T-cell (primary cell): ENCODE measurements at regions of chr1 and their contacts with region 1.

Region 1: DNA sequence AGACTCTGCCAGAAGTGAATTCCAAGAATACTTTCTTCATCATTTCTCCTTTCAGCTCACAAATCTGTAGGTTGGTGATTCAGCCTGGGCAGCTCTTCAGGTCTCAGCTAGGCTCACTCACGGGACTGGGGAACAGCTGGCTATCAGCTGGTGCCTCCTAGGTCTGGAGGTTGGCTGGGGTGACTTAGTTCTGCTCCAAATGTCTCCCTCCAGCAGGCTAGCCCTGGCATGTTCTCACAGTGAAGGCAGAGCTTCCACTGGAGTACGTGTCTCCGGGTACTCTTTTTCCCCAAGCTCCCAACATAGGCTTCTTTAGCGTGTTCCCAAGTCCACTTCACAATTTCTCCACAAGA is 12.5 kb upstream of the VAMP4 start:
- DNase-seq: no peak
- ATAC-seq: no peak
- H3K4me3 ChIP-seq: no peak overlapping the region
- H3K4me3 Mint-ChIP-seq: no peak overlapping the region
- H3K27ac ChIP-seq: no peak overlapping the region
- H3K27ac Mint-ChIP-seq: peak overlapping the region in 1 of 2 donors; percentile 34
- H3K4me1 ChIP-seq: no peaks in the 10 kb centered on the region
- H3K4me1 Mint-ChIP-seq: no peaks in the 10 kb centered on the region
- H3K27me3 ChIP-seq: peaks cover 0 to 7% of the 10 kb centered on the region in 2 experiments
- H3K27me3 Mint-ChIP-seq: peaks cover 4 to 5% of the 10 kb centered on the region in 2 donors

Region 2: GRCh38 chr1:171730052-171730451 is 24.3 kb before region 1 on chr1:
- CTCF ChIA-PET with region 1: no interaction called
- POLR2A ChIA-PET with region 1: interaction called, 3 to 10 read pairs
- DNase-seq: no peak
- ATAC-seq: no peak
- H3K4me3 ChIP-seq: no peak overlapping the region
- H3K4me3 Mint-ChIP-seq: no peak overlapping the region
- H3K27ac ChIP-seq: no peak overlapping the region
- H3K27ac Mint-ChIP-seq: no peak overlapping the region
- H3K4me1 ChIP-seq: no peaks in the 10 kb centered on the region
- H3K4me1 Mint-ChIP-seq: peaks cover 34 to 44% (median 34%) of the 10 kb centered on the region in 3 donors
- H3K27me3 ChIP-seq: no peaks in the 10 kb centered on the region
- H3K27me3 Mint-ChIP-seq: no peaks in the 10 kb centered on the region